Gastrocnemius medialis (tissue), 4 donors: ENCODE measurements at regions of chr16 and their contacts with region 1.

Region 1: DNA sequence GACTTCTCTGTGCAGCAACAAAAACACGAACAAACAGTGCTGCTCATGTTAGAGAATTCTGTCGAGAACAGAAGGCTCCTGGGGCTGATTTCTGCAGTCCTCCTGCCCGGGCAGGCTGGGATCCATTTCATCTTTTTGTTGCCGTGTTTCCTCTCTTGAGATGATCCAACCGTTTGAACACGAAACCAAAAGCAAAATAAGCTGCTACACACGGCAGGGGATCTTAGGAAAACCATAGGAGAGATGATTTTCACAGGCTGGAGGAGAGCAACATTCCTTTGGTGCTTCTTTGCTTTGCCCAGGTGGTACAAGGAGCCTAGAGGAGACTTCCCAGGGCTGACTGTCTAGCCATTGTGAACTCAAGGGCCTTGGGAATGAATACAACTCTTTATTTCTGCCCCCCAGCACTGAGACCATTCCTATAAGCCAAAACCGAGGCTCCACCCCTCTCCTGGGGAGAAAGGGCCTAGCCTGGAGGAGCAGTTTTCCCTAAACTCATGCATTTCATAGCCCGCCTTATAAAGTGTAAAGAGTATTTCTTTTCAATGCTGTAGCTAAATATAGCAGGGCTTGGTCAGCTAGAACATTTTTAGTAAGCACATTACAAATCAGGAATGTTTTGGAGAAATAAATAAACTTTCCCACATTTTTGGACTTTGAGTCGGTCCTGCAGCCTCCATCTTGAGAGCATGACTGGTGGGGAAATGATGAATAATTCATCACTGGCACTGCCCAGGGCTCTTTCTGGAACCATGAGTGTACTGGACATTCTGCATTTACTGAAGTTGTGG is 7.7 kb downstream of the FOXL1 start:
- DNase-seq: no peak
- ATAC-seq: no peak
- H3K4me3 ChIP-seq: no peak overlapping the region
- H3K27ac ChIP-seq: peak overlapping the region in 3 of 4 donors; percentile 11 to 71 (median 24)
- H3K4me1 ChIP-seq: peaks cover 0 to 10% of the 10 kb centered on the region in 2 donors
- H3K27me3 ChIP-seq: no peaks in the 10 kb centered on the region
- CTCF ChIP-seq: no peak
- POLR2A ChIP-seq: no peak

Region 2: GRCh38 chr16:84925092-84925772 is 1660.8 kb before region 1 on chr16:
- in situ Hi-C with region 1: no loop called
- intact Hi-C with region 1: no loop called
- DNase-seq: peak; percentile 33 to 55
- ATAC-seq: peak in 1 of 2 donors; percentile 36
- H3K4me3 ChIP-seq: no peak overlapping the region
- H3K27ac ChIP-seq: peak overlapping the region in 3 of 4 donors; percentile 8 to 71 (median 52)
- H3K4me1 ChIP-seq: peaks cover 33 to 42% of the 10 kb centered on the region in 2 donors
- H3K27me3 ChIP-seq: no peaks in the 10 kb centered on the region
- CTCF ChIP-seq: peak; percentile 81 to 95 (median 94)
- POLR2A ChIP-seq: no peak

Region 3: GRCh38 chr16:86634292-86634691 is 48.3 kb after region 1 on chr16:
- in situ Hi-C with region 1: no loop called
- intact Hi-C with region 1: no loop called
- DNase-seq: no peak
- ATAC-seq: no peak
- H3K4me3 ChIP-seq: no peak overlapping the region
- H3K27ac ChIP-seq: no peak overlapping the region
- H3K4me1 ChIP-seq: no peaks in the 10 kb centered on the region
- H3K27me3 ChIP-seq: no peaks in the 10 kb centered on the region
- CTCF ChIP-seq: no peak
- POLR2A ChIP-seq: no peak

Region 4: GRCh38 chr16:86751076-86752030 is 165.3 kb after region 1 on chr16:
- in situ Hi-C with region 1: loop called in 3 of 4 experiments (anchors 10 to 25 kb)
- intact Hi-C with region 1: no loop called
- DNase-seq: no peak
- ATAC-seq: peak; percentile 53 to 85
- H3K4me3 ChIP-seq: no peak overlapping the region
- H3K27ac ChIP-seq: peak overlapping the region in 2 of 4 donors; percentile 13 to 39
- H3K4me1 ChIP-seq: peaks cover 4 to 7% of the 10 kb centered on the region in 2 donors
- H3K27me3 ChIP-seq: no peaks in the 10 kb centered on the region
- CTCF ChIP-seq: no peak
- POLR2A ChIP-seq: no peak